ENCODE measurements at regions of chr11 and their contacts with region 1.

Region 1: GRCh38 chr11:85664615-85665481 is at the start of gene CREBZF:
- DNase-seq: peak; percentile 96
- ATAC-seq: peak; percentile 86
- H3K4me3 Mint-ChIP-seq: peak within 1 kb of the TSS; percentile 99
- H3K27ac Mint-ChIP-seq: peak within 1 kb of the TSS; percentile 97
- H3K4me1 Mint-ChIP-seq: peaks cover 26% of the 10 kb centered on the region
- H3K27me3 Mint-ChIP-seq: no peaks in the 10 kb centered on the region
- CTCF ChIP-seq: no peak
- total RNA-seq, gene CREBZF: 44.8 to 46.5 TPM

Region 2: DNA sequence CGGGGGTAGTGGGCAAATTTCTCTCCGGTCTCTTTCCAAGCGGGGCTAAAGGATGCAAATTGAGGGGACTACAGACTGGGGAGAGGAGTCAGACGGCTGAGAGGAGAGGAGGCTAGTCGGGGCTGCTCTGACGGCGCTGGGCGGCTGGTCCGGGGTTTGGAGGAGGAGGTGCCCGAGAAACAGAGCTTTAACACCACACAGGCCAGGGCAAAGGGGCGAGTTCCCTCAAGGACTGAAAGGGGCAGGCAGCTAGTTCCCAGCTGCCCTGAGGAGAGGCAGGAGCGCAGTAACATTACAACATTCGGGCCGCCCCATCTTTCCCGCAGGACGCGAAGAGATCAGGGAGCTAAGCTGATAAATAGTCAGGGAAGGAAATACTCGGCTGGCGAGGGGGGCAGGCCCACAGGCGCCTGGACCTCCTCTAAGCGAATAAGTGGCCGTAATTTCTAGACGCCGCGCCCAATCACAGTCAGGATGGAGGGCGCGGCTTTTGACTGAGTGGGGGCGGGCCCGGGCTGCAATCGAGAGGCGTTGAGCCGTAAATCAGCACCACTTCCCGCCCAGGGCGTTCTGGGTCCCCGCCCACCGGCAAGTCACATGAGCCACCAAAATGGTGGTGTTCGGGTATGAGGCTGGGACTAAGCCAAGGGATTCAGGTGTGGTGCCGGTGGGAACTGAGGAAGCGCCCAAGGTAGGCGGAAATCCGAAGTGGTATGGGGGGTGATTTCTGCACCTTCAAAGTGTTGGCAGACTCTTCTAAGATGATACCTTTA is 36.7 kb before region 1 on chr11 and contains the start of gene TMEM126B:
- CTCF ChIA-PET with region 1: interaction called, 4 read pairs
- POLR2A ChIA-PET with region 1: interaction called, 14 read pairs
- intact Hi-C with region 1: loop called (anchors 5 kb)
- DNase-seq: peak; percentile 99
- ATAC-seq: peak; percentile 97
- H3K4me3 Mint-ChIP-seq: peak within 1 kb of the TSS; percentile 93
- H3K27ac Mint-ChIP-seq: peak within 1 kb of the TSS; percentile 97
- H3K4me1 Mint-ChIP-seq: peaks cover 36% of the 10 kb centered on the region
- H3K27me3 Mint-ChIP-seq: no peaks in the 10 kb centered on the region
- CTCF ChIP-seq: no peak
- total RNA-seq, gene TMEM126B: 51.6 to 61.2 TPM

Region 3: GRCh38 chr11:85647604-85648299 is 17.1 kb before region 1 on chr11 and contains the start of gene TMEM126A:
- CTCF ChIA-PET with region 1: interaction called, 8 read pairs
- POLR2A ChIA-PET with region 1: interaction called, 38 read pairs
- intact Hi-C with region 1: no loop called
- DNase-seq: peak; percentile 96
- ATAC-seq: peak; percentile 96
- H3K4me3 Mint-ChIP-seq: peak within 1 kb of the TSS; percentile 90
- H3K27ac Mint-ChIP-seq: peak within 1 kb of the TSS; percentile 95
- H3K4me1 Mint-ChIP-seq: peaks cover 37% of the 10 kb centered on the region
- H3K27me3 Mint-ChIP-seq: peaks cover 8% of the 10 kb centered on the region
- CTCF ChIP-seq: no peak
- total RNA-seq, gene TMEM126A: 47.3 to 48.9 TPM

Region 4: DNA sequence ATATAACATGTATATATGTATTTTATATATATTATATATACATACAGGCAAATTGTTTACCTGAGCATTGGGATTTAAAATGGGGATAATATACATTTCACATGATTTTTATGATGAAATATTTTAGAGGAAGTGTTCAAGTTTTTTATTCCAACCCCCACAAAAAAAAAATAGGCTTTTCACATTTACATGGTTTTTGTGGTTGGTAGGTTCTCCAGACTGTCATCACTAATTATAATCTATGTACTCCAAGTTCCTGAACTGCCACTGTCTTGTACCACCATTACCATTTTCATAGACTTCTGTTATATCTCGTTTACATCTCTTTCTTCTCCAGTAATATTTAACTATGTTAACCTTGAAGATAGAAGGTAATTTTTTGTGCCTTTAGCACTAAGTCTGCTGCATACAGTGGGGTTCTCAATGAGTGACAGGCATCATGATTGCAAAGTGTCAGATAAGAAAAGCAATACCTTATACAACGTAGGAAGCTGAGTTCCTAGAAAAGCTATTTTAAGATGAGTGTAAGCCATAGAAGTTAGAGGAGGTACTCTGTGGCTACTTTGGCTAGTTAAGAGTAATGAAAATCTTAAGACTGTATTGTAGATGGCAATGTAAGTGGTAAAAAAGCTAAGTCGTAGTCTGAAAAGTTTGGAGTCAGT is 11.9 kb before region 1 on chr11:
- CTCF ChIA-PET with region 1: interaction called, 8 read pairs
- POLR2A ChIA-PET with region 1: interaction called, 38 read pairs
- intact Hi-C with region 1: no loop called
- DNase-seq: no peak
- ATAC-seq: peak; percentile 45
- H3K4me3 Mint-ChIP-seq: no peak overlapping the region
- H3K27ac Mint-ChIP-seq: peak overlapping the region; percentile 80
- H3K4me1 Mint-ChIP-seq: peaks cover 58% of the 10 kb centered on the region
- H3K27me3 Mint-ChIP-seq: no peaks in the 10 kb centered on the region
- CTCF ChIP-seq: no peak

Region 5: GRCh38 chr11:85759915-85760314 is 95.1 kb after region 1 on chr11:
- CTCF ChIA-PET with region 1: no interaction called
- POLR2A ChIA-PET with region 1: interaction called, 7 read pairs
- intact Hi-C with region 1: loop called (anchors 10 kb)
- DNase-seq: no peak
- ATAC-seq: no peak
- H3K4me3 Mint-ChIP-seq: no peak overlapping the region
- H3K27ac Mint-ChIP-seq: no peak overlapping the region
- H3K4me1 Mint-ChIP-seq: peaks cover 74% of the 10 kb centered on the region
- H3K27me3 Mint-ChIP-seq: no peaks in the 10 kb centered on the region
- CTCF ChIP-seq: no peak

Region 6: DNA sequence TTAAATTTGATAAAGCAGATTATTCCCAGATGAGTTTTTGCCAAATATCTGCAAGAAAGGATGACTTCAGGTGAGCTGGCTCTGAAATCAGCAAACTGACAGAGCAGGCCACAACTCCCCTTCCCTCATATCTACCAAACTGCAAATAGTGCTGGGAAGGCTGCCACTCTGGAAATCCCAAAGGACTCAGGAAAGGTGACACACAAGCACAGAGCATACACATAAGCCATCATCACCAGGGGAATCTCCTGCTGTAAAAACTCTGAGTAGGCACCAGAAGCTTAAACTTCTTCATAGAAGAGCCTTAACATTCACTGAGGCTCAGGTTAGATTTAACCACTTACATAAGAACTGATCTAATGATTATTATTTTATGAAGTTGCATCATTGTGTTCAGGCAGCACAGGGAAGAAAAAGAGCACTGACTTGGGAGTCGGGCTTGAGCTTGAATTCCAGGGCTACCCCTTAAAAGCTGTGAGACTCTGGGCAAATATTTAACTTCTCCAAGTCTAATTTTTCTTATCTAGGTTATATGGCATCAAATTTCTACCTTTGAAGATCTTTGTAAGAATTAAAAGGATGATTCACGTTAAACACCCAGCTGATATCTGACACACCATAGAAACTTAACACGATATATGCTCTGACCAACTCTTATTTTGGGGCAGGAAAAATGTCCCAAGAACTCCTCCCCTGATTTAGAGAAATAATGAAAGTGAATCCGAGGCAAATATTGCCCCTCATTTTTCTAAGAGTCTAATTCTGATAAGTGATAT is 131.1 kb after region 1 on chr11:
- CTCF ChIA-PET with region 1: no interaction called
- POLR2A ChIA-PET with region 1: no interaction called
- intact Hi-C with region 1: no loop called
- DNase-seq: no peak
- ATAC-seq: no peak
- H3K4me3 Mint-ChIP-seq: no peak overlapping the region
- H3K27ac Mint-ChIP-seq: no peak overlapping the region
- H3K4me1 Mint-ChIP-seq: peaks cover 31% of the 10 kb centered on the region
- H3K27me3 Mint-ChIP-seq: no peaks in the 10 kb centered on the region
- CTCF ChIP-seq: no peak

Region 7: GRCh38 chr11:85826116-85826855 is 161.4 kb after region 1 on chr11:
- CTCF ChIA-PET with region 1: no interaction called
- POLR2A ChIA-PET with region 1: interaction called, 4 read pairs
- intact Hi-C with region 1: loop called (anchors 10 kb)
- DNase-seq: peak; percentile 39
- ATAC-seq: no peak
- H3K4me3 Mint-ChIP-seq: no peak overlapping the region
- H3K27ac Mint-ChIP-seq: no peak overlapping the region
- H3K4me1 Mint-ChIP-seq: peaks cover 62% of the 10 kb centered on the region
- H3K27me3 Mint-ChIP-seq: no peaks in the 10 kb centered on the region
- CTCF ChIP-seq: peak; percentile 17

Measured in activated CD8-positive, alpha-beta T cell treated with anti-CD3 and anti-CD28 coated beads for 36 hours (primary cell).